Dendritic cell treated with granulocyte-macrophage colony-stimulating factor and Interleukin-4, amounts not matched to agents 40 ng/mL and 50 ng/mL, for 4 days (primary cell): ENCODE measurements at regions of chr5 and their contacts with region 1.

Region 1: GRCh38 chr5:88826646-88827585 is 56.1 kb downstream of the MEF2C start:
- H3K4me3 Mint-ChIP-seq: peak overlapping the region; percentile 45
- H3K27ac Mint-ChIP-seq: peak overlapping the region; percentile 87
- H3K4me1 Mint-ChIP-seq: peaks cover 53% of the 10 kb centered on the region
- H3K27me3 Mint-ChIP-seq: no peaks in the 10 kb centered on the region

Region 2: DNA sequence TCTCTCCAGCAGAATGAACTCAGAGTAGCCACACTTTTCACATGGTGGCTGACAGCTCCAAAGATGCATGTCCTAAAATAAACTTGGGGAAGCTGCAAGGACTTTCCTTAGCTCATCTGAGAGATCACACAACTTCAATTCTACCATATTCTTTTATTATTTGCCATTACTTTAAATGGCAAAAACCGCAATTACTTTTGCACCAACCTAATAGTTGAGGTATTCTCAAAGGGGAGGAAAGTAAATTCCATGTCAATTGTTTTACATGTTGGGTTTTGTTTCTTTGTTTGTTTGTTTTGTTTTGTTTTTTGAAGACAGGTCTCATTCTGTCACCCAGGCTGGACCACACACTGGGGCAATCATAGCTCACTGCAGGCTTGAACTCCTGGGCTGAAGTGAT is 299.1 kb before region 1 on chr5:
- intact Hi-C with region 1: no loop called
- H3K4me3 Mint-ChIP-seq: no peak overlapping the region
- H3K27ac Mint-ChIP-seq: no peak overlapping the region
- H3K4me1 Mint-ChIP-seq: no peaks in the 10 kb centered on the region
- H3K27me3 Mint-ChIP-seq: no peaks in the 10 kb centered on the region

Region 3: GRCh38 chr5:88602584-88602983 is 224.3 kb before region 1 on chr5:
- intact Hi-C with region 1: no loop called
- H3K4me3 Mint-ChIP-seq: no peak overlapping the region
- H3K27ac Mint-ChIP-seq: no peak overlapping the region
- H3K4me1 Mint-ChIP-seq: no peaks in the 10 kb centered on the region
- H3K27me3 Mint-ChIP-seq: no peaks in the 10 kb centered on the region

Region 4: DNA sequence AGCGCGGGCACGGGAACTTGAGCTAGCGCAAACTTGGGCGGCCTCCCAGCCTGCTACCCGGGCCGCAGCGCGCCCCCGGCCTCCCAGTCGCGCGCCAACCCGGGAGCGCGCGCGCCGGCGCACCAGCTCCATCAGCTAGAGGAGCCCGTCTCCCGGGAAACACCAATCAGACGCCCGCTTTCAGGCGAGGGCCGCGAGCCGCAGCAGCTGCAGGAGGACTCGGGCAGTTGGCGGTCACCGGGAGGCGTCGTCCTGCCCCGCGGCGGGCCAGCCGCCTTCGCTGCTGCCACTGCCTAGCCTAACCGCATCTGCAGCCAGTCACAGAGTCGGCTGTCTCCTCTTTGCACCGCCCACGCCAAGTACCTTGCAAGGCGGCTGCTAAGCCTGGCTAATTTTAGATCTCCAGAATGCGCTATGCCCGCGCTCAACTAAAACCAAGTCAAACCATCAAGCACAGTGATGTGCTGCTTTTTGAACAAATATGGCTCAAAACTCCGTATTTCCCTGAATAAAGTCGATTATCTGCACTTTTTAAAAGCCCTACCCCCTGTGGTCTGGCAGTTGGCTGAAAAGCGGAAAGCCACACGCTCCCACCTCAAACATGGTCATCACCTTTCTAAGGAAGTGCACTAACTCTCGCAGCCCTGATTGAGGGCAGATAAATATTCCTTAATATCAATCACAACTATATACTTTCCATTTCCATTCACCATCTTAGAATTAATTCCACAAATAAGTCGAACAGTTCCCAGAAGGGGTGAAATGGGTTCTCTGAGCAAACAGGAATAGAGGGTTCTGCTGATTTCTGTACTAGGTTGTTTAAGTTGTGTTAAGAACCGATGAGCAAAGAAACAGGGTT is 165.7 kb before region 1 on chr5:
- intact Hi-C with region 1: no loop called
- H3K4me3 Mint-ChIP-seq: peak overlapping the region; percentile 72
- H3K27ac Mint-ChIP-seq: no peak overlapping the region
- H3K4me1 Mint-ChIP-seq: peaks cover 21% of the 10 kb centered on the region
- H3K27me3 Mint-ChIP-seq: peaks cover 77% of the 10 kb centered on the region

Region 5: GRCh38 chr5:88761269-88761850 is 65.6 kb before region 1 on chr5:
- intact Hi-C with region 1: loop called (anchors 10 kb)
- H3K4me3 Mint-ChIP-seq: peak overlapping the region; percentile 66
- H3K27ac Mint-ChIP-seq: peak overlapping the region; percentile 87
- H3K4me1 Mint-ChIP-seq: peaks cover 21% of the 10 kb centered on the region
- H3K27me3 Mint-ChIP-seq: no peaks in the 10 kb centered on the region

Region 6: GRCh38 chr5:88785391-88786219 is 41.3 kb before region 1 on chr5:
- intact Hi-C with region 1: loop called (anchors 5 kb)
- H3K4me3 Mint-ChIP-seq: no peak overlapping the region
- H3K27ac Mint-ChIP-seq: peak overlapping the region; percentile 30
- H3K4me1 Mint-ChIP-seq: peaks cover 38% of the 10 kb centered on the region
- H3K27me3 Mint-ChIP-seq: no peaks in the 10 kb centered on the region

Region 7: DNA sequence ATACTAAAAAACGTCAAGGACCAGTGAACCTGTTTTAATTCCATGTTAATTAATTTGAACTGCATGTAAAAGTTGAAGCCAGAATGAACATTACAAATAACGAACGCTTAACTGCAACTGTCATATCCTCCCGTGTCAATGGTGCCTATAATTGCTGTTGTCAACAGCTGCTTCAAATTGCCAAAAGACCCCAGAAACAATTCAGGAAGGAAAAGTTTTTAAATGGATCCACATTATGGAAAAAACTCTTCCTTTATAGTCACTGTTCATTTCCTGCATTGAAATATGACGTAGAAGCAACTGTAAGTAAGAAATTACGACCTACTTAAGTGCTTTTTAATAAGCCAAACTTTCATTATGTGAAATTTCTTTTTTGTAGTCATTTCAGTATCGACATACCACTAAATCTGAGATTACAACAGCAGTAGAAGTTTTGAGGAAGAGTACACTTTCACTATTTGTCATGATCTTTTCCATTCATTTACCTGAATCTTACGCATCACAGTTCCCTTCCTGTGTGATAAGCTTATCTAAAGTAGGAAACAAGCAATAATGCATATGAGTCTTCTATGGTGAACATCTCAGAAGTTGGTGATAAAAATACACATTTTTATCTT is 18.3 kb after region 1 on chr5:
- intact Hi-C with region 1: loop called (anchors 2 kb)
- H3K4me3 Mint-ChIP-seq: no peak overlapping the region
- H3K27ac Mint-ChIP-seq: no peak overlapping the region
- H3K4me1 Mint-ChIP-seq: peaks cover 11% of the 10 kb centered on the region
- H3K27me3 Mint-ChIP-seq: no peaks in the 10 kb centered on the region